B cell (primary cell): ENCODE measurements at regions of chr13 and their contacts with region 1.

Region 1: GRCh38 chr13:32031025-32031814 is at the start of gene FRY:
- DNase-seq: peak; percentile 71
- ATAC-seq: peak; percentile 71
- H3K4me3 ChIP-seq: peak within 1 kb of the TSS; percentile 66 to 87 (median 68)
- H3K4me3 Mint-ChIP-seq: peak within 1 kb of the TSS; percentile 76
- H3K27ac ChIP-seq: peak within 1 kb of the TSS in 1 of 2 donors; percentile 58
- H3K27ac Mint-ChIP-seq: peak within 1 kb of the TSS; percentile 79
- H3K4me1 ChIP-seq: peaks cover 8 to 10% of the 10 kb centered on the region in 2 donors
- H3K4me1 Mint-ChIP-seq: peaks cover 23% of the 10 kb centered on the region
- H3K27me3 ChIP-seq: peaks cover 0 to 6% (median 0%) of the 10 kb centered on the region in 4 experiments
- H3K27me3 Mint-ChIP-seq: no peaks in the 10 kb centered on the region
- CTCF ChIP-seq: no peak
- total RNA-seq, gene FRY: 6.3 and 7.8 TPM in 2 replicates

Region 2: DNA sequence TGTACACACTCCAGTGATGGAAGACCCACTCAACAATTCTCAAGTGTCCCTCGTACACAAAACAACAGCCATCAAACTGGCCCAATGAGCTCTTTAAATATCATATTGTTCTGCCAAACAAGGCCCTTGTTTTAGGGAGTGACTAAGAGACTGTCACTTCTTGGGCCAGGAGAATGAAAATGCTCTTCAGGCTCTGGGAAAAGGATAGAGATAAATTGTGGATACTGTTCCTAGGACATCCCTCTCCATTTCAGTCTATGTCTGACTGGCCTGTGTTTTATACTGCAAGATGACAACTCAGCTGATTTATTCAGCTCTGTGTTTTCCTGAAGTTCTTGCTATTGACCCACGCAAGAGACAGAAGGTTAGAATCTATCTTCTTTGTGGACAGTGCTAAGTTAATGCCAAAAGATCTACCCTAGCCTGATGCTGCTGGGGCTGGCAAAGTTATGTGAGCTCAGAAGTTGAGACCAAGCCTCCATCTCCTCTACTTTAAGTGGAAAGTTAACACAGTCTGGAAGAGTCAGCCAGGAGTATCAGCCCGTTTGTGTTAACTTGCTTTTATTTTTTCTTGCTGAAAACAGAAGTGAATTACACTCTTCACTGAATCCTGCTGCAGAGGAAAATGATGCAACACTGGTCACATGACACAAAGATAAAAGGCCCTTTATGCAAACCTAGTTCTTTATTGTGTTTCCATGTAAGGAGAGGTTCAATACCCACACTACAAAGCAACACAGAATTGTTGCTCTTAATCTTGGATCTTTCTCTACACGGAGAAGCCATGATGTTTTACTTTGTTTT is 15.0 kb after region 1 on chr13:
- CTCF ChIA-PET with region 1: interaction called, 4 read pairs
- POLR2A ChIA-PET with region 1: no interaction called
- intact Hi-C with region 1: loop called (anchors 2 kb)
- DNase-seq: peak; percentile 36
- ATAC-seq: no peak
- H3K4me3 ChIP-seq: no peak overlapping the region
- H3K4me3 Mint-ChIP-seq: peak overlapping the region; percentile 9
- H3K27ac ChIP-seq: peak overlapping the region in 1 of 2 donors; percentile 23
- H3K27ac Mint-ChIP-seq: peak overlapping the region; percentile 17
- H3K4me1 ChIP-seq: peaks cover 21 to 25% of the 10 kb centered on the region in 2 donors
- H3K4me1 Mint-ChIP-seq: peaks cover 36% of the 10 kb centered on the region
- H3K27me3 ChIP-seq: no peaks in the 10 kb centered on the region
- H3K27me3 Mint-ChIP-seq: no peaks in the 10 kb centered on the region
- CTCF ChIP-seq: no peak

Region 3: DNA sequence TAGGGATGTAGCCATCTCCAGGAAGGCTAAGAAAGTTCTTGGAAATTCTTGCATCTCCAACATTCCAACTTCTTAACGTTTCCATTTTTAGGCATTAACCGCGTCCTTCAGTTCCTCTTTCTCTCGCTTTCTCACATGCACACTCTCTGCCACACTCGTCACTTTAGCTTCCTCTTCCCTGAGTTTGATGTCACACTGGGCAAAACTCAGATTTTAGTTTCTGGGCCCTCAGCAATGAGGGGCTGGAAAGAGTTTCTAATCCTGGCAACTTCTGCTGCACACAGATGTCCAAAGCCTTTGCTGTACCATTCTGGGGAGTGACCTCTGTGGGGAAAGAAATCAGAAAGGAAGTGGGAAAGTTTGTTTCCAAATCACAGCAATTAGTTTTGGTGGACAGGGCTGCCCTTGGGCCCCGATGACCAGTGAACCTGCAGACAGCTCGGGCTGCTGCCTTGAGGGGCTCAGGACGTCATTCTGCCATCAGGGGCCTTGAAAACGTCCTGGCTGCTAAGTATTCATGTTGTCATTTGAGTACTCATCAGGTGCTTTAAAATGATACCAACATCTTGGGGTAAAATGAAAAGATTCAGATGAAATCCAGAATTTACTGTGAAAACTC is 1074.3 kb after region 1 on chr13:
- CTCF ChIA-PET with region 1: no interaction called
- POLR2A ChIA-PET with region 1: no interaction called
- intact Hi-C with region 1: no loop called
- DNase-seq: peak; percentile 37
- ATAC-seq: no peak
- H3K4me3 ChIP-seq: no peak overlapping the region
- H3K4me3 Mint-ChIP-seq: peak overlapping the region; percentile 24
- H3K27ac ChIP-seq: no peak overlapping the region
- H3K27ac Mint-ChIP-seq: no peak overlapping the region
- H3K4me1 ChIP-seq: peaks cover 21 to 36% of the 10 kb centered on the region in 2 donors
- H3K4me1 Mint-ChIP-seq: peaks cover 38% of the 10 kb centered on the region
- H3K27me3 ChIP-seq: peaks cover 0 to 11% (median 5%) of the 10 kb centered on the region in 4 experiments
- H3K27me3 Mint-ChIP-seq: peaks cover 31% of the 10 kb centered on the region
- CTCF ChIP-seq: no peak